ENCODE measurements at regions of chr20 and their contacts with region 1.

Region 1: GRCh38 chr20:49501917-49502316 is 19.4 kb upstream of the KCNB1 start:
- DNase-seq: no peak
- ATAC-seq: peak; percentile 71; the same call in 1 of the 2 replicates
- H3K4me3 ChIP-seq: no peak overlapping the region
- H3K27ac ChIP-seq: no peak overlapping the region
- H3K4me1 ChIP-seq: no peaks in the 10 kb centered on the region
- H3K27me3 ChIP-seq: no peaks in the 10 kb centered on the region
- CTCF ChIP-seq: no peak

Region 2: GRCh38 chr20:49278036-49278817 is 223.7 kb before region 1 on chr20 and contains the start of gene ZNFX1:
- CTCF ChIA-PET with region 1: no interaction called
- POLR2A ChIA-PET with region 1: no interaction called
- in situ Hi-C with region 1: no loop called
- intact Hi-C with region 1: no loop called
- DNase-seq: peak; percentile 95
- ATAC-seq: peak; percentile 95
- H3K4me3 ChIP-seq: peak within 1 kb of the TSS; percentile 93 to 96
- H3K27ac ChIP-seq: peak within 1 kb of the TSS; percentile 98
- H3K4me1 ChIP-seq: peaks cover 28% of the 10 kb centered on the region
- H3K27me3 ChIP-seq: no peaks in the 10 kb centered on the region
- CTCF ChIP-seq: no peak
- total RNA-seq, gene ZNFX1: 39.4 TPM

Region 3: DNA sequence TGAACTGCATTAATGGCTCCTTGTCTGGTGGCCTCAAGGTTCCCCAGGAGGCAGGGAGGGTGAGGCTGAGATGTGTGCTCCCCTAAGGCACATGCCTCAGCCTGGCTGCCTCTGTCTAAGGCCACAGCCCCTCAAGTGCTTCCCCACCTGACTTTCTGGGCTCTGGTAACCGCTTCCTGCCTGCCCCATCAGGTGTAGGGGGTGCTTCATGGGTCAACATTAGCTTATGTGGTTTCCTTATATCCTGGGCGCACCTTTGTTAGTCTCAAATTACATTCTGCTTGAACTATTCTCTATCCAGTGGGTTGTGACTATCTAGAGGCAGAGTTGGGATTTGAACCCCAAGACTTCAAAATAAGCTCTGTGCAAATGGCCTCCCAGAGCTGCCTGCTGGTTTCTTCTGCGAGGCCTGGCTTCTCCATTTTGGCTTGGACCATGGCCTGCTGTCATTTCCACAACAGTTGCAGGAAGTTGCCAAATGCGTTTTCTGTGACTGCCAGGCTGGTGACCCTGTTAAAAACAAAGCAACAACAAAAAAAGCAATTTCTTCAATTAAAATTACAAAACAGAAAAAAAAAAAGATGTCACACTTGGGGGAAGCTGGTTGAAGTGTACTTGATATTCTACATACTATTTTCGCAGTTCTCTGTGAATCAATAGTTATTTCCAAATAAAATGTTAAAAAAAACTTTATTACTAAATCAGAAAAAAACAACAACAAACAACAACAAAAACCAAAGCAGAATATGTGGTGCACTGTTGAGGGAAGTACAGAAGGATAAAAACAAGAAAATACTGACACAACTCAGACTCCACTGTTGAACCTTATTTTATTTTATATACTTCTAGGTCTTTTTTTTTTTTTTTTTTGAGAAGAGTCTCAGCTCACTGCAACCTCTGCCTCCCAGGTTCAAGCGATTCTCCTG is 204.0 kb before region 1 on chr20:
- CTCF ChIA-PET with region 1: no interaction called
- POLR2A ChIA-PET with region 1: interaction called, 10 read pairs
- in situ Hi-C with region 1: no loop called
- intact Hi-C with region 1: no loop called
- DNase-seq: no peak
- ATAC-seq: no peak
- H3K4me3 ChIP-seq: no peak overlapping the region
- H3K27ac ChIP-seq: no peak overlapping the region
- H3K4me1 ChIP-seq: no peaks in the 10 kb centered on the region
- H3K27me3 ChIP-seq: no peaks in the 10 kb centered on the region
- CTCF ChIP-seq: no peak

Region 4: GRCh38 chr20:49372095-49372726 is 129.7 kb before region 1 on chr20:
- CTCF ChIA-PET with region 1: no interaction called
- POLR2A ChIA-PET with region 1: interaction called, 12 read pairs
- in situ Hi-C with region 1: no loop called
- intact Hi-C with region 1: no loop called
- DNase-seq: no peak
- ATAC-seq: no peak
- H3K4me3 ChIP-seq: no peak overlapping the region
- H3K27ac ChIP-seq: peak overlapping the region; percentile 13; the same call in 1 of the 2 replicates
- H3K4me1 ChIP-seq: peaks cover 6% of the 10 kb centered on the region; the same call in 1 of the 2 replicates
- H3K27me3 ChIP-seq: no peaks in the 10 kb centered on the region
- CTCF ChIP-seq: no peak

Region 5: DNA sequence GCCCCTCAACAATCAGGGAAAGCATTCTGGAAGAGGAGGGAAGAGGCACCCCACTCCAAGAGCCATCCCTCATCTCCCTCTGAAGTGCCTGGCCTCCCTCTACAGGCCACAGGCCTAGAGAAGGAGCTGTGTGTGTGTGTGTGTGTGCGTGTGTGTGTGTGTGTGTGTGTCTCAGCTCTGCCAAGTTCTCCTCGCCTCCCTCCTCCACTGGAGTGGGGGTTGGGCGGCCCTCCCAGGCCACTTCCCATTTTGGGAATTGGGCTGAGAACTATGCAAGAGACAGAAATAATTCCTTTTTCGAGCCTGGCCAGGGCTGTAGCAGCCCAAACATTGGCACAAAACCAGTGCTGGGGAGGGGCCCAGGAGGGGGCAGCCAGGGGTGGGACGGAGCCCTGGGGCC is 55.1 kb before region 1 on chr20:
- CTCF ChIA-PET with region 1: no interaction called
- POLR2A ChIA-PET with region 1: no interaction called
- in situ Hi-C with region 1: no loop called
- intact Hi-C with region 1: no loop called
- DNase-seq: no peak
- ATAC-seq: no peak
- H3K4me3 ChIP-seq: no peak overlapping the region
- H3K27ac ChIP-seq: no peak overlapping the region
- H3K4me1 ChIP-seq: peaks cover 8% of the 10 kb centered on the region
- H3K27me3 ChIP-seq: no peaks in the 10 kb centered on the region
- CTCF ChIP-seq: no peak